ENCODE measurements at regions of chr9 and their contacts with region 1.

Region 1: DNA sequence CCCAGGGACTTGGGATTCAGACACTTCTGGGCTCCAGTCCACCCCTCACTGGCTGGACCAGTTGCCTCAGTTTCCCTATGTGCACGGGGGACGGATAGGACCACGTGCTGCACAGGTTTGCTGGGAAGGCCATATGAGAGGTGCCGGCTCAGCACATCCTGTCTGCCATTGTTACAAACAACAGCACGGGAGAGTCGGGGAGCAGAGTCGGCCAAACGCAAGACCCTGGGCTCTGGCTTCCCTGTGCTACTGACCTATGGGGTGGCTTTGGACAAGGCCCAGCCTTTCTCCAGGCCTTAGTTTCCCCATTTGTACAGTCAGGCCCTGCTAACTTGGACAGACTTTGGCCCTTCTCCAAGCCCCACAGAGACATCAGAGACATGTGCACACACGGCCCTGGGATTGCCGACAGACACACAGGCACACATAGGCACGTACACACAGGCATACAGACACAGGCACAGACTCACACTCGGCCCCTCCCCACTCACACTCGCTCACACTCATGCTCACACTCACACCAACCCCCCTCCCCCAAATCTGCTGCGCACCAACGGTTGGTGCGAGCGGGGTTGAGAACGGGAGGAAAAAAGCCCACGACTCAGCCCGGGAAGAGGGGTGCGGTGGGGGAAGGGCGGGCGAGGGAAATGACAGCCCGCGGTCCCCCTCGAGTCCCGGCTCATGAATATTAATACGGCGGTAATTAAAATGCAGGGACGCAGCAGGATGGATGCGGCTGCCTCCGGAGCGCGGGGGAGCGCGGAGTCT is 133.1 kb downstream of the C9orf50 start:
- DNase-seq: peak; percentile 91
- H3K4me3 ChIP-seq: peak overlapping the region; percentile 42 to 64 (median 58)
- H3K27ac ChIP-seq: peak overlapping the region; percentile 99 to 100 (median 99)
- H3K4me1 ChIP-seq: peaks cover 0 to 96% (median 89%) of the 10 kb centered on the region in 4 donors
- H3K27me3 ChIP-seq: no peaks in the 10 kb centered on the region
- CTCF ChIP-seq: no peak
- EP300 ChIP-seq: no peak
- POLR2A ChIP-seq: no peak

Region 2: GRCh38 chr9:129139993-129140396 is 347.8 kb before region 1 on chr9:
- intact Hi-C with region 1: loop called (anchors 2 kb)
- DNase-seq: peak; percentile 98
- H3K4me3 ChIP-seq: peak overlapping the region; percentile 36 to 59 (median 50)
- H3K27ac ChIP-seq: peak overlapping the region; percentile 97 to 100 (median 99)
- H3K4me1 ChIP-seq: peaks cover 0 to 73% (median 64%) of the 10 kb centered on the region in 4 donors
- H3K27me3 ChIP-seq: no peaks in the 10 kb centered on the region
- CTCF ChIP-seq: no peak
- EP300 ChIP-seq: peak in 2 of 4 donors; percentile 71 to 76
- POLR2A ChIP-seq: peak; percentile 55 to 62

Region 3: GRCh38 chr9:129464911-129465833 is 22.7 kb before region 1 on chr9:
- intact Hi-C with region 1: no loop called
- DNase-seq: peak; percentile 81
- H3K4me3 ChIP-seq: no peak overlapping the region
- H3K27ac ChIP-seq: peak overlapping the region in 3 of 4 donors; percentile 3 to 56 (median 18)
- H3K4me1 ChIP-seq: peaks cover 0 to 49% (median 40%) of the 10 kb centered on the region in 4 donors
- H3K27me3 ChIP-seq: no peaks in the 10 kb centered on the region
- CTCF ChIP-seq: no peak
- EP300 ChIP-seq: no peak
- POLR2A ChIP-seq: no peak